HEK293T (cell line): ENCODE measurements at regions of chr12 and their contacts with region 1.

Region 1: DNA sequence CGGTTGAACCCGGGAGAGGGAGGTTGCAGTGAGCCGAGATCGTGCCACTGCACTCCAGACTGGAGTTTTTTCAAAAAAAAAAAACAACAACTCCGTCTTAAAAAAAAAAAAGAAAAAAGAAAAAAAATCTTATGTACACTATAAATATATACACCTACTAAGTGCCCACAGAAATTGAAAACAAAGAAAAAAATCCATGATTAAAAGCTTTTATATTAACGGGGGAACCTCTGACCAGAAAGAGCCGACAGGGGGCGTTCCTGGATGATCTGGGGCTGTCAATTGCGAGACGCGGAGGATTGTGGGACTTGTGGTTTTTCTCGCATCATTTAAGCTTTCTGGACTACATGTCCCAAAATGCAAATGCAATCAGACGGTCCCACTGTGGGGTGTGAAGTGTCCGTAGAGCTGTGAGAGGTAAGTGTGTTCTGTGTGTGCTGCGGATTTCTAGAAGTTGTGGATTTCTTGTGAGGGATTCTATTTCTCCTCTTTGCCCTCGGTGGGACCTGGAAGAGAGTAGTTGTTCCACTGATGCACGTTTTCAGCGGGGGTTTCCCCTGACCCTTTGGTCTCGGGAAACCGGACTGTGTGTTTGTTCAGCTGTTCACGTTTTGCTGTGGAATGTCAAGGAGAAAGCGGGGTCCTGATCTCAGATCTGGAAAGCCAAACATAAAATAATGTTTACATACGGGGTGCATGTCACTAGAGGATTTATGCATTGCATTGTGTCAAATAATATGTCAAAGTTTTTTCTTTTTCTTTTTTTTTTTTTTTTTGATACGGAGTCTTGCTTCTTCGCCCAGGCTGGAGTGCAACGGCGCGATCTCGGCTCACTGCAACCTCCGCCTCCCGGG is at the start of gene SIRT4:
- DNase-seq: peak; percentile 88

Region 2: DNA sequence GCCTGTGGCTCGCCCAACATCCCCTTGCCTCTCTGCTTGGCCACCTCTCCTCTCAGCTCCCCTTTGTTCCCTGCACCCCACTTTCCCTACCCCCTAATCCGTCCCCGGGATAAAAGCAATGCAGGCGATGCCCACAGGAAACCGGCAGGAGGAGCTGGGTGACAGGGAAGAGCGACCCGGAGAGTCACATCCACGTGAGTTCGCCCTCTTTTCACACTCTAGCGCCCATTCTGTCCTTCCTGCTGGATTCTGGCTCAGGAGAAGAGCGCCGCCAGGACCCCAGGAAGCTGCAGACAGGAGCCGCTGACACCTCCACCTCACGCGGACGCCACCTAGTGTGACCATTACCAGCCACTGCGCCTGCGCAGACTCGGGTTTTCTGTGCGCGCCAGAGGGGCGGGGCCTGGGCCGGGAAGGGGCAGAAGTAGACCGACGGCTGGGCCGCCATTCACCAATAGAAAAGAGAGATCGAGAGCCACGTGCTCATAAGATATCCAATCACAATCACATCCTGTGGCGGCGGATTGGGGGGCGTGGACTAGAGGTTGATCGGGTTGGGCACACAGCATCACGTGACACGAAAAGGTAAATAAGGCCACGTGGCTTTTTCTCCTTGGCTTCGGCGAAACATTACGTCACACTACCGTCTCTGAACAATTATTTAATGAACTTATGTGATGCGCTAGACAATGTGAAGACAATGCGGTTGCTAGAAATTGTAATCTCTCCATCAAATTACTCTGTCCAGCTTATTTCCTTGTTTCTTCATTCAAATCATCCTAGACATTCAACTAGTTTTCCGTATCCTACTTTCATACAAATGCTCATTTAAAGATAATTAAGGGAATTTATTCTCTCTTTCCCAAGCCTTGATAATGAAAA is 15.3 kb after region 1 on chr12:
- CTCF ChIA-PET with region 1: interaction called, 12 read pairs
- POLR2A ChIA-PET with region 1: interaction called, 11 read pairs
- DNase-seq: peak; percentile 98